Aorta (tissue), 5 donors: ENCODE measurements at regions of chr15 and their contacts with region 1.

Region 1: GRCh38 chr15:38795471-38796245 is 231.0 kb upstream of the RASGRP1 start:
- DNase-seq: no peak
- ATAC-seq: no peak
- H3K4me3 ChIP-seq: no peak overlapping the region
- H3K27ac ChIP-seq: no peak overlapping the region
- H3K4me1 ChIP-seq: peaks cover 0 to 5% of the 10 kb centered on the region in 2 donors
- H3K27me3 ChIP-seq: no peaks in the 10 kb centered on the region

Region 2: DNA sequence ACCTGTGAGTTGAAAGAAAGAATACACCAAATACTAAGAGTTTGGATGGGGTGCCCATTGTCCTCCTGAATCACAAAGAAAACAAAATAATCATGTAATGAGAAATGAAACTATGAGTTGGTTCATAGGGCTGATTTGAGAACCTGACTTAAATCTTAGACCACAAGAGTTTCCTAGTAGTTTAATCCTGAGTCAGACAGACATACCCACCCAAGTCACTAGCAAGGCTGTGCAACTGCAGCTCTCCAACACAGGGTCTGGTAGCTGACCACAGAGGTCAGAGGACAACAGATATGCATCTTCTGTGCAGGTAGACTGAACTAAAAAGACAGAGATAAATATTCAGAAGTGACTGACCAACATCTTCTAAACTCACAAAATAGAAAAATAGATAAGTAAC is 1157.5 kb before region 1 on chr15:
- intact Hi-C with region 1: no loop called
- DNase-seq: no peak
- ATAC-seq: no peak
- H3K4me3 ChIP-seq: no peak overlapping the region
- H3K27ac ChIP-seq: no peak overlapping the region
- H3K4me1 ChIP-seq: no peaks in the 10 kb centered on the region
- H3K27me3 ChIP-seq: no peaks in the 10 kb centered on the region

Region 3: GRCh38 chr15:38187630-38188313 is 607.9 kb before region 1 on chr15:
- intact Hi-C with region 1: loop called in 1 of 2 experiments (anchors 10 kb)
- DNase-seq: no peak
- ATAC-seq: no peak
- H3K4me3 ChIP-seq: no peak overlapping the region
- H3K27ac ChIP-seq: no peak overlapping the region
- H3K4me1 ChIP-seq: no peaks in the 10 kb centered on the region
- H3K27me3 ChIP-seq: no peaks in the 10 kb centered on the region